Lower leg skin (tissue), 4 donors: ENCODE measurements at regions of chr15 and their contacts with region 1.

Region 1: GRCh38 chr15:33292717-33293307 is 18.0 kb upstream of the RYR3 start:
- DNase-seq: peak in 1 of 2 donors; percentile 30
- H3K4me3 ChIP-seq: no peak overlapping the region
- CTCF ChIP-seq: no peak
- POLR2A ChIP-seq: no peak

Region 2: DNA sequence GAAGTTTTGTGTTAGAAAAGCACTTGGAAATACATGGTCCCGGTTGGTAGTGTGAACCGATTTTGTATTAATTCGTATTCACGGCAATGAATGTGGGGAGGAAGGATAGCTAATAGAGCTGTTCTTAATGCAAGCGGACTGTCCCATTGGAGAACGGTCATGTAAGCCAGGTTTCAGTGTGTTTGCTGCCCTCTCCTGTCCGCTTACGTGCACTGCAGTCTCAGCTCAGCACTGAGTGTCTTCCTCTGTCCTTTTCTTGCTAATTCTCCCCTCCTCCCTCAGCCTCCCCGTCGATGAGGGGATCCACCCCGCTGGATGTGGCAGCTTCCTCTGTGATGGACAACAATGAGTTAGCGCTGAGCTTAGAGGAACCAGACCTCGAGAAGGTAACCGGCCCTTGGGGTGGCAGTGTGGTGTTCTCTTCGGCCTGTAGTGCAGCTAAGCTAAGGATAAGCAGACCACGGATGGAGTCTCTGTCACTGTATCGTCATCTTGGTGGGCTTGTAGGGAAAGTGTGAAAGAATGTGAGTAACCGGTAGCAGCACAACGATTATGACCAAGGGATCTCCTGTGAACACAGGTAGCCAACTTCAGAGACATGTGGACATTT is 408.0 kb after region 1 on chr15:
- intact Hi-C with region 1: loop called (anchors 5 kb)
- DNase-seq: peak; percentile 55 to 93
- H3K4me3 ChIP-seq: no peak overlapping the region
- CTCF ChIP-seq: peak in 1 of 3 donors; percentile 77
- POLR2A ChIP-seq: no peak

Region 3: DNA sequence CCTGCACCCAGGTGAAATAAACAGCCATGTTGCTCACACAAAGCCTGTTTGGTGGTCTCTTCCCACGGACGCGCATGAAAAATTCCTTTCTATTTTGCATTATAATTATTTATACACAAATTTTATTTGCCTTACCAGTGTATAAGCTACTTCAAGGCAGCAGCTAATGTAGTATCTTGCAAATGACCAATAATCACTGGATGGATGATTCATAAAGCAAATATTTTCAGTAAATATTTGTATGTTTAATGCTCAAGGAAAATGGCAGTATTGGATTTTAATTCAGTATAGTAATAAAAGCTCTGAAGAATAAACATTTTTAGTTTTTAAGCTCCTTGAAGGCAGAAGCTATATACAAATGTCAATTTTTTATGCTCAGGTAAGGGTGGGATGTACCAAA is 1950.9 kb after region 1 on chr15:
- intact Hi-C with region 1: no loop called
- DNase-seq: no peak
- H3K4me3 ChIP-seq: no peak overlapping the region
- CTCF ChIP-seq: no peak
- POLR2A ChIP-seq: no peak